ENCODE measurements at regions of chr16 and their contacts with region 1.

Region 1: DNA sequence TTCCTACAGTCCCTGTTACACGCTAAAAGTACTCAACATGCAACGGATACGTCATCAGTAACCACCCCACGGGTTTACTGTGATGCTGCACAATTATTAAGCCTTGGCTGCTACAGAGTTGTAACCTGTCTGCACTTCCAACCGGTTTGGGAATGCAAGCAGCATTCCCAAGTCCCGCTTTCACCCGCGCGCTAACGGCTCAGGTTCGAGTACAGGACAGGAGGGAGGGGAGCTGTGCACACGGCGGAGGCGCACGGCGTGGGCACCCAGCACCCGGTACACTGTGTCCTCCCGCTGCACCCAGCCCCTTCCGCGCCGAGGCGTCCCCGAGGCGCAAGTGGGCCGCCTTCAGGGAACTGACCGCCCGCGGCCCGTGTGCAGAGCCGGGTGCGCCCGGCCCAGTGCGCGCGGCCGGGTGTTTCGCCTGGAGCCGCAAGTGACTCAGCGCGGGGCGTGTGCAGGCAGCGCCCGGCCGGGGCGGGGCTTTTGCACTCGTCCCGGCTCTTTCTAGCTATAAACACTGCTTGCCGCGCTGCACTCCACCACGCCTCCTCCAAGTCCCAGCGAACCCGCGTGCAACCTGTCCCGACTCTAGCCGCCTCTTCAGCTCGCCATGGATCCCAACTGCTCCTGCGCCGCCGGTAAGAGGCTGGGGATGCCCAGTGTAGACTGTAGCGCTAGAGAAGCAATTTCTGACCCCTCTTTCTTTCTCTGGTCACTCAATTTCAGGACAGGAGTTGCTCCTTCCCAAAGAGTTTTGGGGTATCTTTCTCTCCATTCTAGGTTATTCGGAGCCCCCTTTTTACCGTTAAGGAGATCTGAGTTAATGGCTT is at the start of gene MT2A:
- DNase-seq: peak; percentile 98
- H3K4me3 Mint-ChIP-seq: peak within 1 kb of the TSS; percentile 96
- H3K27ac Mint-ChIP-seq: peak within 1 kb of the TSS; percentile 98
- H3K4me1 Mint-ChIP-seq: peaks cover 52% of the 10 kb centered on the region
- H3K27me3 Mint-ChIP-seq: no peaks in the 10 kb centered on the region
- total RNA-seq, gene MT2A: 465 TPM in 2 replicates

Region 2: GRCh38 chr16:56450986-56451752 is 157.1 kb before region 1 on chr16 and contains the starts of genes NUDT21 and OGFOD1:
- intact Hi-C with region 1: loop called (anchors 1 kb)
- DNase-seq: peak; percentile 97
- H3K4me3 Mint-ChIP-seq: peak within 1 kb of the TSS; percentile 94
- H3K27ac Mint-ChIP-seq: peak within 1 kb of the TSS; percentile 95
- H3K4me1 Mint-ChIP-seq: peaks cover 41% of the 10 kb centered on the region
- H3K27me3 Mint-ChIP-seq: no peaks in the 10 kb centered on the region
- total RNA-seq, gene NUDT21: 282 and 297 TPM in 2 replicates
- total RNA-seq, gene OGFOD1: 87.0 and 89.2 TPM in 2 replicates

Region 3: GRCh38 chr16:56643080-56643778 is 35.0 kb after region 1 on chr16:
- intact Hi-C with region 1: loop called (anchors 1 kb)
- DNase-seq: peak; percentile 94
- H3K4me3 Mint-ChIP-seq: peak overlapping the region; percentile 81
- H3K27ac Mint-ChIP-seq: peak overlapping the region; percentile 53
- H3K4me1 Mint-ChIP-seq: peaks cover 22% of the 10 kb centered on the region
- H3K27me3 Mint-ChIP-seq: peaks cover 61% of the 10 kb centered on the region

Region 4: GRCh38 chr16:56681939-56682702 is 73.9 kb after region 1 on chr16 and contains the start of gene MT1X:
- intact Hi-C with region 1: loop called (anchors 1 kb)
- DNase-seq: peak; percentile 97
- H3K4me3 Mint-ChIP-seq: peak within 1 kb of the TSS; percentile 94
- H3K27ac Mint-ChIP-seq: peak within 1 kb of the TSS; percentile 93
- H3K4me1 Mint-ChIP-seq: peaks cover 21% of the 10 kb centered on the region
- H3K27me3 Mint-ChIP-seq: no peaks in the 10 kb centered on the region
- total RNA-seq, gene MT1X: 62.7 and 66.9 TPM in 2 replicates

Region 5: DNA sequence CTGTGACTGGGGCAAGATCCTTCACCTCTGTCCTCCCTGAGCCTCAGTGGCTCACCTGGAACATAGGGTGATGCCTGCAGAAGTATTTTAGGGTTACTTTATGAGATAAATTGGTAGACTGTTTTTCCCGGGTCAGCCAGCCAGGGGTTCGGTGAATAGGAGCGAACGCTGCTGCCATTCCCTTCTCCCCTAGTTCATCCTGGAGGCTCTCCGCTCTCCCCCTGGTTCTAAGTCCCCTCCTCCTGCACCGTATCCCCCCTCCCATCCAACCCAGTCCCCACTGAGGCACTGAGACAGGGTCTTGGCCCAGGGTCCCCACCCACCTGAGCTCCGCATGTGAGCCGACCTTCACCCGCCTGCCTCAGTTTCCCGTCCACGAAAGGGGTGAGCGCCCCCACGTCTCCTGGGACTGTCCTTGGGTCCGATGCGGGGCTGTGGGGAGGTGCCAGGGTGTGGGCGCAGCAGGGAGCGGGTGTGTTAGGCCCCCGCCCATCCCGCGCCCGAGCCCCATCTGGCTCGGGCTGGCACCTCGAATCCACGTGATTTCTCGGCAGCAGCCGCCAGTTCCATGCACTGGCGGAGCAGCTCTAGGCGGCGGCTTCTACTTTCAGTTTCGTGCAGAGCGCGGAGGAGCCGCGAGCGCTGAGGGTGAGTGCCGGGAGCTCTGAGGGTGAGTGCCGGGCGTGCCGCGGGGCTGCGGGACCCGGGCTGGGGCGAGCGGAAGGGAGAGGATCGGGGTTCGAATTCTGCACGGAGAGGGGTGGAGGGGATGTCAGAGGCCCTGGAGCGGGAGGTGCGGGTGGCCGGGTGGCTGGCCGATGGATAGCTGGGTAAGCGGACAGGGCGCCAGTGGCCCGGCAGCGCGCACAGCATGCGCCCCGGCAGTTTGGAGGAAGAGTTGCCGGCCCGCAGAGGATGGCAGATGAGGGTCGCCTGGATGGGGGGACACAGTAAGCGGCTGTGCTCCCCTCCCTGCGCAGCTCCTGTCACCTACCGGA is 381.0 kb after region 1 on chr16 and contains the start of gene NLRC5:
- intact Hi-C with region 1: loop called (anchors 5 kb)
- DNase-seq: peak; percentile 98
- H3K4me3 Mint-ChIP-seq: peak within 1 kb of the TSS; percentile 97
- H3K27ac Mint-ChIP-seq: peak within 1 kb of the TSS; percentile 99
- H3K4me1 Mint-ChIP-seq: peaks cover 74% of the 10 kb centered on the region
- H3K27me3 Mint-ChIP-seq: no peaks in the 10 kb centered on the region
- total RNA-seq, gene NLRC5: 208 and 214 TPM in 2 replicates

Region 6: GRCh38 chr16:57535680-57536305 is 927.5 kb after region 1 on chr16:
- intact Hi-C with region 1: loop called (anchors 10 kb)
- DNase-seq: peak; percentile 98
- H3K4me3 Mint-ChIP-seq: peak overlapping the region; percentile 86
- H3K27ac Mint-ChIP-seq: peak overlapping the region; percentile 89
- H3K4me1 Mint-ChIP-seq: peaks cover 63% of the 10 kb centered on the region
- H3K27me3 Mint-ChIP-seq: no peaks in the 10 kb centered on the region